ENCODE measurements at regions of chr6 and their contacts with region 1.

Region 1: GRCh38 chr6:129598244-129599187 is 111.5 kb downstream of the ARHGAP18 start:
- DNase-seq: no peak
- ATAC-seq: peak; percentile 74
- H3K4me3 Mint-ChIP-seq: no peak overlapping the region
- H3K27ac Mint-ChIP-seq: no peak overlapping the region
- H3K4me1 Mint-ChIP-seq: no peaks in the 10 kb centered on the region
- H3K27me3 Mint-ChIP-seq: no peaks in the 10 kb centered on the region

Region 2: GRCh38 chr6:129292836-129293235 is 305.7 kb before region 1 on chr6:
- CTCF ChIA-PET with region 1: no interaction called
- POLR2A ChIA-PET with region 1: no interaction called
- intact Hi-C with region 1: no loop called
- DNase-seq: no peak
- ATAC-seq: no peak
- H3K4me3 Mint-ChIP-seq: no peak overlapping the region
- H3K27ac Mint-ChIP-seq: no peak overlapping the region
- H3K4me1 Mint-ChIP-seq: no peaks in the 10 kb centered on the region
- H3K27me3 Mint-ChIP-seq: peaks cover 2% of the 10 kb centered on the region

Region 3: GRCh38 chr6:129498950-129499842 is 99.3 kb before region 1 on chr6:
- CTCF ChIA-PET with region 1: interaction called, 27 read pairs
- POLR2A ChIA-PET with region 1: no interaction called
- intact Hi-C with region 1: loop called in 1 of 2 experiments (anchors 1 kb)
- DNase-seq: no peak
- ATAC-seq: peak; percentile 56
- H3K4me3 Mint-ChIP-seq: peak overlapping the region; percentile 47
- H3K27ac Mint-ChIP-seq: peak overlapping the region; percentile 88
- H3K4me1 Mint-ChIP-seq: peaks cover 66% of the 10 kb centered on the region
- H3K27me3 Mint-ChIP-seq: no peaks in the 10 kb centered on the region

Region 4: DNA sequence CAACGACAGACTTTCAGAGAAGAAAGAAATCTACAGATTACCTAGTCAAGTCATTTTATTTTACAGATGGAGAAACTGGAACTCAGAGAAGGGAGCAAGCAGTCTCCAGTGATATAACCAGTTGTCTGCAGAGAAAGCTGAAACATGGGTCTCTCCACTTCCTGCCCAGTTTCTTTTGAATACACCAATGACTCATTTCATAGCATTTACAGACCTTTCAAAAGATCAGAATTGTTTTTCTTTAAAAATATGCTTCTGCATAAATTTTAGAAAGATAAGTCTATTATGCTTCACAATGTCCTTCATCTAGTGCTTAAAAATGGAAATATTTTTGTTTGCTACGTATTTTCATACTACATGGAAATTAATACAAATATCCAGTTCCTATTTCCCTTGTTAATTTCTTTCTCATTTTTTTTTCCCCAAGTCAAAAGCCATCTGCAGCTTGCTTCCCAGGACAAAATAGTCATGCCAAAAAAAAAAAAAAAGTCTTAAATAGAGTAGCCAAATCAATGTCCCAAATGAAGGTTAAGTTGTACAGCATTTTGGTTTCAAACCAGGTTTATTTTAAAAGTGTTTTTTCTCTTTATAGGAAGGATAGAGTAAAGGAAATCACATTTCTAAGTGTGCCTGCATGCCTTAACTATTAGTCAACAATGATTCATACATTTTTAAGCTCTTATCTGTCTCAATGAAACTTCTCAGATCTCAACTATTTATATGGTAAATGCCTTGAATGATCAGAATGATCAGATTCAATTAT is 74.5 kb after region 1 on chr6:
- CTCF ChIA-PET with region 1: interaction called, 24 read pairs
- POLR2A ChIA-PET with region 1: no interaction called
- intact Hi-C with region 1: loop called (anchors 1 to 2 kb)
- DNase-seq: peak; percentile 24
- ATAC-seq: peak; percentile 69
- H3K4me3 Mint-ChIP-seq: peak overlapping the region; percentile 59
- H3K27ac Mint-ChIP-seq: peak overlapping the region; percentile 92
- H3K4me1 Mint-ChIP-seq: peaks cover 38% of the 10 kb centered on the region
- H3K27me3 Mint-ChIP-seq: peaks cover 2% of the 10 kb centered on the region

Region 5: DNA sequence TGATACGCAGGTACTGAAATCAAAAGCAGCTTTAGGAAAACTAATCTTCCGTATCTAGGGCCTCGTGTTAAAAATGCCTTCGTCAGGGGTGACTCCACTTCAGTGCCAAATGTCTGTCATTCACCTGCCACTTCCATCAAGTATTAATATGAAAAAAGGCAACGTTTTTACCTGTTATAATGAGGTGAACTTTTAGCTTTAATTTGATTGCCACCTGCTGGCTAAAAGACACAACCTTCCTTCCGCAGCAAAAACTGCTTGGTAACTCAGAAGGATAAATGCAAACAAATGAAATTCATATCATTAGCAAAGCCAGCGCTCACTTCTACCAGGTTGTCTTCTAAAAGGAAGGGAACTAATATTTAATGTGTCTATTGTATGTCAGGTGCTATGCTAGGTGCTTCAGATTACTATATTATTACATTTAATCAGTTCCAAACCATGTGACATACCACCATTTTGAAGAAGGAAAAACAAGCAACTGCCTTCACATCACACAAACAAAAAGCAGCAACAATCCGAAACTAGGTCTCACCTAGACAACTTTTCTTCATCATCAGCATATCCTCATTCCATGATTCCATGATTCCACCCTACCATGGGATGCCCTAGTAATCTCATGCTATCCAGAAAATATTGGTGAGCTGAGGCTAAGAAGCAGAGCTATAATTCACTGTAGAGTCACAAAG is 132.1 kb after region 1 on chr6:
- CTCF ChIA-PET with region 1: interaction called, 157 read pairs
- POLR2A ChIA-PET with region 1: no interaction called
- intact Hi-C with region 1: loop called (anchors 1 kb)
- DNase-seq: peak; percentile 27
- ATAC-seq: peak; percentile 39
- H3K4me3 Mint-ChIP-seq: no peak overlapping the region
- H3K27ac Mint-ChIP-seq: peak overlapping the region; percentile 68
- H3K4me1 Mint-ChIP-seq: peaks cover 9% of the 10 kb centered on the region
- H3K27me3 Mint-ChIP-seq: no peaks in the 10 kb centered on the region

Region 6: GRCh38 chr6:129766959-129767728 is 168.6 kb after region 1 on chr6:
- CTCF ChIA-PET with region 1: interaction called, 11 read pairs
- POLR2A ChIA-PET with region 1: no interaction called
- intact Hi-C with region 1: no loop called
- DNase-seq: peak; percentile 82
- ATAC-seq: peak; percentile 97
- H3K4me3 Mint-ChIP-seq: peak overlapping the region; percentile 62
- H3K27ac Mint-ChIP-seq: no peak overlapping the region
- H3K4me1 Mint-ChIP-seq: peaks cover 12% of the 10 kb centered on the region
- H3K27me3 Mint-ChIP-seq: peaks cover 38% of the 10 kb centered on the region

Region 7: GRCh38 chr6:129936329-129937165 is 338.0 kb after region 1 on chr6:
- CTCF ChIA-PET with region 1: interaction called, 13 read pairs
- POLR2A ChIA-PET with region 1: no interaction called
- intact Hi-C with region 1: loop called (anchors 2 to 5 kb)
- DNase-seq: peak; percentile 59
- ATAC-seq: no peak
- H3K4me3 Mint-ChIP-seq: no peak overlapping the region
- H3K27ac Mint-ChIP-seq: no peak overlapping the region
- H3K4me1 Mint-ChIP-seq: no peaks in the 10 kb centered on the region
- H3K27me3 Mint-ChIP-seq: peaks cover 9% of the 10 kb centered on the region

Measured in activated CD4-positive, alpha-beta T cell treated with anti-CD3 and anti-CD28 coated beads for 36 hours (primary cell).